GM13977 (cell line): ENCODE measurements at regions of chr11 and their contacts with region 1.

Region 1: GRCh38 chr11:17230867-17231851 is 23.4 kb upstream of the PIK3C2A start:
- DNase-seq: peak; percentile 26
- CTCF ChIP-seq: no peak

Region 2: GRCh38 chr11:17366495-17366894 is 135.3 kb after region 1 on chr11:
- in situ Hi-C with region 1: loop called (anchors 10 kb)
- DNase-seq: no peak
- CTCF ChIP-seq: no peak